Naive thymus-derived CD4-positive, alpha-beta T cell (primary cell): ENCODE measurements at regions of chr13 and their contacts with region 1.

Region 1: GRCh38 chr13:99075268-99076191 is 97.7 kb upstream of the DOCK9 start:
- DNase-seq: peak in 7 of 9 donors; percentile 29 to 64 (median 55)
- ATAC-seq: peak; percentile 84
- H3K4me3 ChIP-seq: peak overlapping the region; percentile 11
- H3K4me3 Mint-ChIP-seq: peak overlapping the region; percentile 44 to 82 (median 64)
- H3K27ac ChIP-seq: peak overlapping the region; percentile 54
- H3K27ac Mint-ChIP-seq: peak overlapping the region; percentile 75 to 95 (median 89)
- H3K4me1 ChIP-seq: peaks cover 27 to 39% of the 10 kb centered on the region in 2 donors
- H3K4me1 Mint-ChIP-seq: peaks cover 40 to 92% (median 88%) of the 10 kb centered on the region in 7 donors
- H3K27me3 ChIP-seq: no peaks in the 10 kb centered on the region
- H3K27me3 Mint-ChIP-seq: no peaks in the 10 kb centered on the region

Region 2: DNA sequence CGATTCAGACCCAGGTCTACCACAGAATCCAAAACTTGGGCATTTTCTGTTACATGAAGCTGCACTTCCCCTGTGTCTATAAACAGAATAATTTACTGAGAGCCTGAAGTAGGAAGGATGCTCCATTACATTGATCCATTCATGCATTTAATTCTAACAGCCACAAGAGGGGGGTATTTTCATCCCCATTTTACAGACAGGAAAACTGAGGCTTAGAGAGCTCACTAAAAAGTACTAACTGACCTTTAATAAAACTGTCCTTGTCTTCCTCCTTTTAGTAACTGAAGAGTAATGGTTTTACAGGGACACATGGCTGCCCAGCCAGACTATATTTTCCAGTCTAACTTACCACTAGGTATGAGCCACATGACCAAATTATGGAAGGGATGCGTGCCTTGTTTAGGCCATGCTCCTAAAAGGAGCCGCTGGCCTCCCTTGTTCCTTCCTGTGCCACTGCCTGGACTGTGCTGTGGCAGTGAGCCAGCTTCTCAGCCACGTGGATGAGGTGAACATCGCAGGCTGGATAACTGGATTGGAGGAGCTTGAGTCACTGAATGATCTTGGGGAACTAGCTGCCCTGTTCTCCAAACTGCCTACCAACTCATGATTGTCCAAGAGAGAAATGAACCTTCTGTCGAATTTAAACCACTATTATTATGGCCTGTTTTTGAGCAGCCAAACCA is 206.0 kb before region 1 on chr13:
- CTCF ChIA-PET with region 1: no interaction called
- POLR2A ChIA-PET with region 1: no interaction called
- intact Hi-C with region 1: loop called in 1 of 2 experiments (anchors 5 kb)
- DNase-seq: peak in 1 of 9 donors; percentile 3
- ATAC-seq: no peak
- H3K4me3 ChIP-seq: no peak overlapping the region
- H3K4me3 Mint-ChIP-seq: no peak overlapping the region
- H3K27ac ChIP-seq: no peak overlapping the region
- H3K27ac Mint-ChIP-seq: peak overlapping the region in 3 of 9 donors; percentile 11 to 57 (median 23)
- H3K4me1 ChIP-seq: no peaks in the 10 kb centered on the region
- H3K4me1 Mint-ChIP-seq: peaks cover 0 to 33% (median 17%) of the 10 kb centered on the region in 7 donors
- H3K27me3 ChIP-seq: no peaks in the 10 kb centered on the region
- H3K27me3 Mint-ChIP-seq: no peaks in the 10 kb centered on the region

Region 3: GRCh38 chr13:98890186-98890585 is 185.3 kb before region 1 on chr13:
- CTCF ChIA-PET with region 1: no interaction called
- POLR2A ChIA-PET with region 1: no interaction called
- intact Hi-C with region 1: loop called in 1 of 2 experiments (anchors 5 kb)
- DNase-seq: peak in 1 of 9 donors; percentile 56
- ATAC-seq: no peak
- H3K4me3 ChIP-seq: no peak overlapping the region
- H3K4me3 Mint-ChIP-seq: no peak overlapping the region
- H3K27ac ChIP-seq: no peak overlapping the region
- H3K27ac Mint-ChIP-seq: peak overlapping the region in 6 of 9 donors; percentile 9 to 60 (median 42)
- H3K4me1 ChIP-seq: no peaks in the 10 kb centered on the region
- H3K4me1 Mint-ChIP-seq: peaks cover 0 to 17% (median 3%) of the 10 kb centered on the region in 7 donors
- H3K27me3 ChIP-seq: no peaks in the 10 kb centered on the region
- H3K27me3 Mint-ChIP-seq: no peaks in the 10 kb centered on the region

Region 4: DNA sequence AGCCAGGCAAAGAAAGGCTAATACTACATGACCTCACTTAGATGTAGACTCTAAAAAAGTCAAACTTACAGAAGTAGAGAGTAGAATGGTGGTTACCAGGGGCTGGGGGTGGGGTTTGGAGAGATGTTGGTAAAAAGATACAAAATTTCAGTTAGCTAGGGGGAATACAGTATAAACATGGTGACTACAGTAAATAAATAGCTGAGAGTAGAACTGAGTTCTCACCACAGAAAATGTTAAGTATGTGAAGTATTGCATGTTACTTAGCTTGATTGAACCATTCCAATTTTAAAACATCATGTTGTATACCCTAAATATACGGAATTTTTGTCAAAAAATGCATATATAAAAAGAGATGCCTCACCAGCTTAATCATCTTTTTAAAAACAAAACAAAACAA is 30.1 kb before region 1 on chr13:
- CTCF ChIA-PET with region 1: interaction called, 8 read pairs
- POLR2A ChIA-PET with region 1: interaction called, 14 read pairs
- intact Hi-C with region 1: loop called (anchors 1 kb)
- DNase-seq: no peak
- ATAC-seq: no peak
- H3K4me3 ChIP-seq: no peak overlapping the region
- H3K4me3 Mint-ChIP-seq: peak overlapping the region; percentile 60 to 88 (median 80)
- H3K27ac ChIP-seq: peak overlapping the region; percentile 70
- H3K27ac Mint-ChIP-seq: peak overlapping the region; percentile 85 to 97 (median 94)
- H3K4me1 ChIP-seq: peaks cover 79 to 93% of the 10 kb centered on the region in 2 donors
- H3K4me1 Mint-ChIP-seq: peaks cover 64 to 100% (median 89%) of the 10 kb centered on the region in 7 donors
- H3K27me3 ChIP-seq: no peaks in the 10 kb centered on the region
- H3K27me3 Mint-ChIP-seq: peaks cover 0 to 19% (median 0%) of the 10 kb centered on the region in 5 donors

Region 5: GRCh38 chr13:99051768-99052455 is 23.6 kb before region 1 on chr13:
- CTCF ChIA-PET with region 1: interaction called, 8 read pairs
- POLR2A ChIA-PET with region 1: interaction called, 14 read pairs
- intact Hi-C with region 1: loop called (anchors 1 kb)
- DNase-seq: peak in 7 of 9 donors; percentile 48 to 81 (median 71)
- ATAC-seq: peak; percentile 65
- H3K4me3 ChIP-seq: peak overlapping the region; percentile 49
- H3K4me3 Mint-ChIP-seq: peak overlapping the region; percentile 75 to 88 (median 80)
- H3K27ac ChIP-seq: peak overlapping the region; percentile 61
- H3K27ac Mint-ChIP-seq: peak overlapping the region; percentile 72 to 96 (median 91)
- H3K4me1 ChIP-seq: peaks cover 72 to 95% of the 10 kb centered on the region in 2 donors
- H3K4me1 Mint-ChIP-seq: peaks cover 68 to 100% (median 92%) of the 10 kb centered on the region in 7 donors
- H3K27me3 ChIP-seq: no peaks in the 10 kb centered on the region
- H3K27me3 Mint-ChIP-seq: peaks cover 0 to 10% (median 0%) of the 10 kb centered on the region in 5 donors

Region 6: GRCh38 chr13:99057310-99057975 is 18.1 kb before region 1 on chr13:
- CTCF ChIA-PET with region 1: interaction called, 7 read pairs
- POLR2A ChIA-PET with region 1: interaction called, 11 read pairs
- intact Hi-C with region 1: no loop called
- DNase-seq: no peak
- ATAC-seq: no peak
- H3K4me3 ChIP-seq: no peak overlapping the region
- H3K4me3 Mint-ChIP-seq: peak overlapping the region in 2 of 10 donors; percentile 8 to 50
- H3K27ac ChIP-seq: no peak overlapping the region
- H3K27ac Mint-ChIP-seq: peak overlapping the region in 8 of 9 donors; percentile 7 to 96 (median 74)
- H3K4me1 ChIP-seq: peaks cover 28 to 78% of the 10 kb centered on the region in 2 donors
- H3K4me1 Mint-ChIP-seq: peaks cover 46 to 99% (median 94%) of the 10 kb centered on the region in 7 donors
- H3K27me3 ChIP-seq: no peaks in the 10 kb centered on the region
- H3K27me3 Mint-ChIP-seq: peaks cover 0 to 19% (median 0%) of the 10 kb centered on the region in 5 donors

Region 7: GRCh38 chr13:100514788-100515409 is 1439.4 kb after region 1 on chr13:
- CTCF ChIA-PET with region 1: no interaction called
- POLR2A ChIA-PET with region 1: no interaction called
- intact Hi-C with region 1: no loop called
- DNase-seq: peak; percentile 37 to 74 (median 63)
- ATAC-seq: peak; percentile 94
- H3K4me3 ChIP-seq: no peak overlapping the region
- H3K4me3 Mint-ChIP-seq: no peak overlapping the region
- H3K27ac ChIP-seq: no peak overlapping the region
- H3K27ac Mint-ChIP-seq: peak overlapping the region in 1 of 9 donors; percentile 80
- H3K4me1 ChIP-seq: peaks cover 0 to 7% of the 10 kb centered on the region in 2 donors
- H3K4me1 Mint-ChIP-seq: peaks cover 0 to 30% (median 6%) of the 10 kb centered on the region in 7 donors
- H3K27me3 ChIP-seq: no peaks in the 10 kb centered on the region
- H3K27me3 Mint-ChIP-seq: peaks cover 0 to 4% (median 0%) of the 10 kb centered on the region in 5 donors